ENCODE measurements at regions of chr6 and their contacts with region 1.

Region 1: GRCh38 chr6:24431045-24431451 is 28.3 kb downstream of the MRS2 start:
- DNase-seq: peak; percentile 36
- ATAC-seq: peak; percentile 55
- H3K4me3 Mint-ChIP-seq: no peak overlapping the region
- H3K27ac Mint-ChIP-seq: no peak overlapping the region
- H3K4me1 Mint-ChIP-seq: no peaks in the 10 kb centered on the region
- H3K27me3 Mint-ChIP-seq: no peaks in the 10 kb centered on the region
- CTCF ChIP-seq: peak; percentile 81

Region 2: GRCh38 chr6:24140591-24140990 is 290.5 kb before region 1 on chr6:
- CTCF ChIA-PET with region 1: no interaction called
- POLR2A ChIA-PET with region 1: no interaction called
- intact Hi-C with region 1: no loop called
- DNase-seq: no peak
- ATAC-seq: no peak
- H3K4me3 Mint-ChIP-seq: no peak overlapping the region
- H3K27ac Mint-ChIP-seq: no peak overlapping the region
- H3K4me1 Mint-ChIP-seq: no peaks in the 10 kb centered on the region
- H3K27me3 Mint-ChIP-seq: no peaks in the 10 kb centered on the region
- CTCF ChIP-seq: no peak

Region 3: DNA sequence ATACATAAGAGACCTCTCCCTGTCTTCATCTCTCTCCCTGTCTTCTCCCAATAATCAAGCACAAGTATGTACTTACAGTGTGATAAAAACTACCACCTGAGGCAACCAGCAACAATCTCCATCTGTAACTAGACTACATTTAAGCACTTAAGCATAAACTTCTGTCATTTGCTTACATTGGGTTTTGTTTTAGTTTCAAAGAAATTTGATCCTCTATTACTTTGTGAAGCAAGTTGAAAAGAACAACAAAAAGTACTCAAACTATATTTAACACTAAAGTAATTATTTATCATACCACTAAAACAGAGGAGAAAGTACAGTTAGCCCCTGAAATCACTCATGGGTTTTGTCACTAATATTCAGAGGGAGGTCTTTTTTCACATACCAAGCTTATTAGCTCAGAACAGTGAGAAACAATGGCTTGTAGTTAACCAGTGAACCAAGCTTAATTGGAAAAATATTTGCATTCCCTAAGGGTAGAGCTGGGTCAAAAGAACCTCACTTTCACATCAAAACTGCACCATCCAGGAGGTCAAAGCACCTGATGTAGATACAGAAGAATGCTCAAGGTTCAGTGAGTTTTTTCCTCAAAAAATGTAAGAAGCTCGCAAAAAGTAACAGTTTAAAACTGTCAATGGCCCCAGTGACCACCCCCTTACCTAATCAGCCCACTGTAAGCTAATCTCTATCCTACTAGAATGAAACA is 107.3 kb before region 1 on chr6:
- CTCF ChIA-PET with region 1: no interaction called
- POLR2A ChIA-PET with region 1: no interaction called
- intact Hi-C with region 1: no loop called
- DNase-seq: no peak
- ATAC-seq: no peak
- H3K4me3 Mint-ChIP-seq: no peak overlapping the region
- H3K27ac Mint-ChIP-seq: no peak overlapping the region
- H3K4me1 Mint-ChIP-seq: no peaks in the 10 kb centered on the region
- H3K27me3 Mint-ChIP-seq: peaks cover 14% of the 10 kb centered on the region
- CTCF ChIP-seq: no peak

Region 4: GRCh38 chr6:24415753-24416152 is 15.3 kb before region 1 on chr6:
- CTCF ChIA-PET with region 1: interaction called, 22 read pairs
- POLR2A ChIA-PET with region 1: no interaction called
- intact Hi-C with region 1: no loop called
- DNase-seq: no peak
- ATAC-seq: no peak
- H3K4me3 Mint-ChIP-seq: no peak overlapping the region
- H3K27ac Mint-ChIP-seq: no peak overlapping the region
- H3K4me1 Mint-ChIP-seq: peaks cover 10% of the 10 kb centered on the region
- H3K27me3 Mint-ChIP-seq: no peaks in the 10 kb centered on the region
- CTCF ChIP-seq: no peak

Region 5: GRCh38 chr6:24440897-24441598 is 10.0 kb after region 1 on chr6:
- CTCF ChIA-PET with region 1: interaction called, 19 read pairs
- POLR2A ChIA-PET with region 1: no interaction called
- intact Hi-C with region 1: no loop called
- DNase-seq: no peak
- ATAC-seq: no peak
- H3K4me3 Mint-ChIP-seq: no peak overlapping the region
- H3K27ac Mint-ChIP-seq: no peak overlapping the region
- H3K4me1 Mint-ChIP-seq: peaks cover 2% of the 10 kb centered on the region
- H3K27me3 Mint-ChIP-seq: no peaks in the 10 kb centered on the region
- CTCF ChIP-seq: no peak